PC-9 (cell line): ENCODE measurements at regions of chr17 and their contacts with region 1.

Region 1: DNA sequence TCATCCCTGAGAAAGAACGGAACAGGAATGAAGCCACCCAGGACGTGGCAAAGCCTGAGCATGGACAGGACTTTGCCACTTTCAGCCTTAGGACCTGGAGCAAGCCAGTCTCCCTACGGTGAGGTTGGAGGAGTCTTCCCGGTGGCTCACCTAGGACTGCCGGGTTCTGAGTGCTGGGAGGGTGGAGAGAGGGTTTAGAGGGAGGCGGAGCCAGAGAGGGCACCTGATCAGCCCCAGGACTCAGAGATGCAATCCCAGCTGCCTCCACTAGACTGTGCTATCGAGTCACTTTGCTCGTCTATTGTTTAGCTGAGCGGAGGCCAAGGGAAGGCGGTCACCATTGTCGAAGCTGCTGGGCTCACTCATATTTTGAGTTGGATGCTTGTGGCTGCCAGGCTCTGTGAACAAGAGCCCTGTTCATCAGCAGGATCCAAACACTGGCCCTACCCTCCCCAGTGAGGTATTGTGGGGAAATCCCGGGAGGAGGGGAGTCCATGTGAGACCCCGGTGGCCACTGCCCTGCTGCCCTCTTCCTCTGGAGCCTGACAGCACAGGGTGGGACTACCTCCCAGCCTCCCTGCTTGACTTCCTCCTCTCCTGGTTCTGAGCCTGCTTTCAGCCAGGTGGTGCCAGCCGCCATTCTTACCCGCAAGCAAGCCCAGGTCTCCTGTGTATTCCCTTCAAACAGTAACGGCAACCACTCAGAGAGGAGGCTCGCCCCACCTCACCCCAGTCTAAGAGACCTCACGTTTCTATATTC is 7.0 kb downstream of the KRT14 start:
- DNase-seq: peak; percentile 62 to 90
- H3K4me3 ChIP-seq: no peak overlapping the region
- H3K27ac ChIP-seq: peak overlapping the region; percentile 37
- H3K4me1 ChIP-seq: peaks cover 56% of the 10 kb centered on the region
- H3K27me3 ChIP-seq: no peaks in the 10 kb centered on the region
- CTCF ChIP-seq: peak; percentile 84

Region 2: DNA sequence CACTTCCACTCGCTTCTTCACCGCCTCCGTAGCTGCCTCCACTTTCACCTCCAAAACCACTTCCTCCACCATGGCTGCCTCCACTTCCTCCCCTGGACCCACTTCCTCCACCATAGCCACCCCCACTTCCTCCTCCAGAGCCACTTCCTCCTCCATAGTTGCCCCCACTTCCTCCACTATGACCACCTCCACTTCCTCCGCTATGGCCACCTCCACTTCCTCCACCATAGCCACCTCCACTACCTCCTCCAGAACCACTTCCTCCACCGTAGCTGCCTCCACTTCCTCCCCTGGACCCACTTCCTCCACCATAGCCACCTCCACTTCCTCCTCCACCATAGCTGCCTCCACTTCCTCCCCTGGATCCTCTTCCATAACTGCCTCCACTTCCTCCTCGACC is 12.3 kb before region 1 on chr17:
- CTCF ChIA-PET with region 1: no interaction called
- POLR2A ChIA-PET with region 1: interaction called, 24 read pairs
- intact Hi-C with region 1: no loop called
- DNase-seq: no peak
- H3K4me3 ChIP-seq: no peak overlapping the region
- H3K27ac ChIP-seq: no peak overlapping the region
- H3K4me1 ChIP-seq: no peaks in the 10 kb centered on the region
- H3K27me3 ChIP-seq: no peaks in the 10 kb centered on the region
- CTCF ChIP-seq: no peak

Region 3: DNA sequence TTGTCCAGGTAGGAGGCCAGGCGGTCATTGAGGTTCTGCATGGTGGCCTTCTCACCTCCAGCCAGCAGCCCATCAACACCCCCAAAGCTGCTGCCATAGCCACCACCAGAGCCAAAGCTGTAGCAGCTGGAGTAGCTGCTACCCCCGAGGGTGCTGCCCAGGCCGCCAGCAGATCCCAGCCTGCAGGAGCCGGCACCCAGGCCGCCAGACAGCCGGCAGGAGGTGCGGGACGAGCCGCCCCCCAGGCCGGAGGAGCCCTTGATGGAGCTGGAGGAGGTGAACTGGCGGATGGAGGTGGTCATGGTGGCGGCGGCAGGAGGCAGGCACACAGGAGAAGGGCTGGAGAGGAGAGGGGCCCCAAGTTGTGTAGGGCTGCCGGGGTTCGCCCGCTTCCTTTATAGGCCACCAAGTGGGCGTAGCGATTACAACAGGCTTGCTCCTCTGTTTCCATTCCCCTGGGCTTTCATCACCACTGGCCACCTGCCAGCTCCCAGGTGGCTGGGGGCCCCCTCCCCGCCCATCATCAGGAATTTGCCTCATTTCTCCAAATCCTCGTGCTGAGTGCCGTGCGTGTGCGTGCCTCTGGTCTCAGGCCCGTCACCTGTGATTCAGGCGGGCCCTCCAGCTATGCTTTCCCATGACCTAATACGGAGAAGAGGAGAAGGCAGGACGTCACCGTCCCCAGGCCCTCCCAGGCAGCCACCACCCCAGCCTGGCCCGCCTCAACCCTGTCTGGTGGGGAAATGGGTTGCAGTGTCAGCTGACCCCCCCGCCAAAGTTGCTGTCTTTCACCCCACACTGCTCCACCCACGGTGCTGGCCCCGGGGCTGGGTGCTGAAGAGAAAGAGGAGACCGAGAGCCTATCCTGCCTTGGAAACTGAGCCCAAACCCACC is 44.8 kb after region 1 on chr17 and contains the start of gene KRT17:
- CTCF ChIA-PET with region 1: no interaction called
- POLR2A ChIA-PET with region 1: no interaction called
- intact Hi-C with region 1: loop called (anchors 5 kb)
- DNase-seq: peak in 1 of 2 experiments; percentile 76
- H3K4me3 ChIP-seq: no peak within 1 kb of the TSS
- H3K27ac ChIP-seq: no peak within 1 kb of the TSS
- H3K4me1 ChIP-seq: peaks cover 8% of the 10 kb centered on the region
- H3K27me3 ChIP-seq: no peaks in the 10 kb centered on the region
- CTCF ChIP-seq: no peak
- total RNA-seq, gene KRT17: 29.0 and 80.8 TPM in 2 replicates